ENCODE measurements at regions of chr19 and their contacts with region 1.

Region 1: GRCh38 chr19:4589579-4590410 is 30.3 kb upstream of the SEMA6B start:
- DNase-seq: peak; percentile 19
- H3K4me3 ChIP-seq: no peak overlapping the region
- H3K27ac ChIP-seq: no peak overlapping the region
- H3K4me1 ChIP-seq: no peaks in the 10 kb centered on the region
- H3K27me3 ChIP-seq: peaks cover 0 to 3% of the 10 kb centered on the region in 2 experiments
- CTCF ChIP-seq: peak; percentile 35 to 69
- POLR2A ChIP-seq: no peak

Region 2: GRCh38 chr19:4624733-4625362 is 35.1 kb after region 1 on chr19:
- CTCF ChIA-PET with region 1: interaction called, 23 read pairs
- POLR2A ChIA-PET with region 1: no interaction called
- dilution Hi-C with region 1: no loop called
- intact Hi-C with region 1: no loop called
- DNase-seq: peak; percentile 42
- H3K4me3 ChIP-seq: no peak overlapping the region
- H3K27ac ChIP-seq: no peak overlapping the region
- H3K4me1 ChIP-seq: no peaks in the 10 kb centered on the region
- H3K27me3 ChIP-seq: no peaks in the 10 kb centered on the region
- CTCF ChIP-seq: peak in 1 of 2 donors; percentile 49
- POLR2A ChIP-seq: no peak

Region 3: GRCh38 chr19:4841366-4841704 is 251.5 kb after region 1 on chr19:
- CTCF ChIA-PET with region 1: no interaction called
- POLR2A ChIA-PET with region 1: no interaction called
- dilution Hi-C with region 1: no loop called
- intact Hi-C with region 1: no loop called
- DNase-seq: no peak
- H3K4me3 ChIP-seq: no peak overlapping the region
- H3K27ac ChIP-seq: no peak overlapping the region
- H3K4me1 ChIP-seq: no peaks in the 10 kb centered on the region
- H3K27me3 ChIP-seq: no peaks in the 10 kb centered on the region
- CTCF ChIP-seq: no peak
- POLR2A ChIP-seq: no peak

Measured in endothelial cell of umbilical vein (primary cell).